ENCODE measurements at regions of chr12 and their contacts with region 1.

Region 1: GRCh38 chr12:32302218-32303173 is 96.9 kb upstream of the FGD4 start:
- DNase-seq: no peak
- H3K4me3 ChIP-seq: no peak overlapping the region
- H3K27ac ChIP-seq: no peak overlapping the region
- H3K4me1 ChIP-seq: peaks cover 10% of the 10 kb centered on the region
- H3K27me3 ChIP-seq: no peaks in the 10 kb centered on the region
- CTCF ChIP-seq: peak; percentile 54

Region 2: GRCh38 chr12:31245822-31246469 is 1056.5 kb before region 1 on chr12:
- CTCF ChIA-PET with region 1: no interaction called
- POLR2A ChIA-PET with region 1: no interaction called
- intact Hi-C with region 1: loop called (anchors 10 kb)
- DNase-seq: peak in 1 of 2 experiments; percentile 33
- H3K4me3 ChIP-seq: no peak overlapping the region
- H3K27ac ChIP-seq: no peak overlapping the region
- H3K4me1 ChIP-seq: no peaks in the 10 kb centered on the region
- H3K27me3 ChIP-seq: no peaks in the 10 kb centered on the region
- CTCF ChIP-seq: no peak

Region 3: GRCh38 chr12:31659087-31659933 is 643.2 kb before region 1 on chr12 and contains the start of gene ETFBKMT:
- CTCF ChIA-PET with region 1: interaction called, 4 read pairs
- POLR2A ChIA-PET with region 1: no interaction called
- intact Hi-C with region 1: loop called (anchors 1 kb)
- DNase-seq: peak; percentile 94 to 97
- H3K4me3 ChIP-seq: peak within 1 kb of the TSS; percentile 62
- H3K27ac ChIP-seq: peak within 1 kb of the TSS; percentile 63
- H3K4me1 ChIP-seq: peaks cover 17% of the 10 kb centered on the region
- H3K27me3 ChIP-seq: no peaks in the 10 kb centered on the region
- CTCF ChIP-seq: peak; percentile 60
- total RNA-seq, gene ETFBKMT: 2.2 and 2.4 TPM in 2 replicates

Region 4: DNA sequence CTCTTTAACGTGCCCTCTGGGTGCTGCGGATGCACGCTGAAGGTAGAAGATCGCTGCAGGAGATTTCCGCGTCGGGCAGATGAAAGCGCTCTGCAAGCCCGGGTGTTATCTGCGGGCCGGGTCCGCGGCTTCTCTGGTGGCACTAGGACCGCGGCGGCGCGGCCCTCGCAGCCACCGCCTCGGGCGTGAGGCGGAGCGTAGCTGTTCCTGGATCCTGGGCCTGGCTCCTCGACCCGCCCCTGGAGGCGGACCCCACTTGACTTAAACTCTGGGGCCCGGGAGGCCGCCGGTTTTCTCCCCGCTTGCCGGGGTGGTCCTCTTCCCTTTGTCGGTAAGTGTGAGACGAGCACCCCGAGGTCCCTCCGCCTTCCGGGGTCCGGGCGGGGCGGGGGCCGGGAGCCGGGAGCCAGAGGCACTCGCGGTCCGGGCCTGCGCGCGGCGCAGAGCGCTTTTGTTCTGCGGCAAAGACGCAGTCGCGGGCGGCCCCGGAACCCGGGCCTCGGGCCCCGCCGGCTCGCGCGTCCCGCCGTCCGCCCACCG is 343.3 kb before region 1 on chr12 and contains the start of gene RESF1:
- CTCF ChIA-PET with region 1: no interaction called
- POLR2A ChIA-PET with region 1: no interaction called
- intact Hi-C with region 1: loop called (anchors 10 kb)
- DNase-seq: peak; percentile 76 to 95
- H3K4me3 ChIP-seq: peak within 1 kb of the TSS; percentile 86
- H3K27ac ChIP-seq: peak within 1 kb of the TSS; percentile 45
- H3K4me1 ChIP-seq: peaks cover 12% of the 10 kb centered on the region
- H3K27me3 ChIP-seq: no peaks in the 10 kb centered on the region
- CTCF ChIP-seq: no peak
- total RNA-seq, gene RESF1: 25.4 and 33.8 TPM in 2 replicates

Region 5: DNA sequence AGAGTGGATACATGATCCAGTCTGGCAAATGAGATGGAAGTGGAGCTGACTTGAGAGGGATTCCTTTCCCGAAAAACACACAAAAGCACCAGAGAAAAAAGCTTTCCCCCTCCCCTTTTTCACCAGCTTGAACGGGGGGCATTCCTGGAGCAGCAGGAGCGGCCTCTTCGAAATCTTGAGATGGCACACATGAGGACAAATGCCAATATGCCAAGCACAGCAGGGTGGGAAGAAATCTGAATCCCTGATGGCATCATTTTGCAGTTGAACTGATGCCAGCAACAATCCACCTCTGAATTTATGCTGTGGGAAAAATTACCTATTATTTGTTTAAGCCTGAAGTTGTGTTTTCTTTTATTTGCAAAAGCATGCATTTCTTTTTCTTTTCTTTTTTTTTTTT is 225.6 kb before region 1 on chr12:
- CTCF ChIA-PET with region 1: interaction called, 22 read pairs
- POLR2A ChIA-PET with region 1: no interaction called
- intact Hi-C with region 1: no loop called
- DNase-seq: no peak
- H3K4me3 ChIP-seq: no peak overlapping the region
- H3K27ac ChIP-seq: no peak overlapping the region
- H3K4me1 ChIP-seq: no peaks in the 10 kb centered on the region
- H3K27me3 ChIP-seq: no peaks in the 10 kb centered on the region
- CTCF ChIP-seq: no peak

Region 6: DNA sequence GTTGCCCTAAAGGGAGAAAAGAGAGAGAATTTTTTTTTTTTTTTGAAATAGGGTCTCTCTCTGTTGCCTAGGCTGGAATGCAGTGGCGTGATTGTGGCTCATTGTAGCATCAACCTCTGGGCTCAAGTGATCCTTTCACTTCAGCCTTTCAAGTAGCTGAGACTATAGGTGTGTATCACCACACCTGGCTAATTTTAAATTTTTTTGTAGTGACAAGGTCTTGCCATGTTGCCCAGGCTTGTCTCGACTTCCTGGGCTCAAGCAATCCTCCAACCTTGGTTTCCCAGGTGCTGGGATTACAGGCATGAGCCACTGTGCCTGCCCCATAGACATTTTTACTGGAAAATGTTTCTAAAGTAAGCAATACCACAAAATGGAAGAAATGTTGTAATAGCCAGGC is 416.4 kb after region 1 on chr12:
- CTCF ChIA-PET with region 1: interaction called, 11 read pairs
- POLR2A ChIA-PET with region 1: no interaction called
- intact Hi-C with region 1: no loop called
- DNase-seq: no peak
- H3K4me3 ChIP-seq: no peak overlapping the region
- H3K27ac ChIP-seq: no peak overlapping the region
- H3K4me1 ChIP-seq: no peaks in the 10 kb centered on the region
- H3K27me3 ChIP-seq: no peaks in the 10 kb centered on the region
- CTCF ChIP-seq: no peak